Activated CD4-positive, alpha-beta memory T cell treated with anti-CD3 and anti-CD28 coated beads for 36 hours (primary cell): ENCODE measurements at regions of chr2 and their contacts with region 1.

Region 1: GRCh38 chr2:73736855-73737779 is at the start of gene TPRKB:
- DNase-seq: peak; percentile 98
- H3K4me3 Mint-ChIP-seq: peak within 1 kb of the TSS; percentile 93
- H3K27ac Mint-ChIP-seq: peak within 1 kb of the TSS; percentile 75
- H3K4me1 Mint-ChIP-seq: peaks cover 20% of the 10 kb centered on the region
- H3K27me3 Mint-ChIP-seq: no peaks in the 10 kb centered on the region
- total RNA-seq, gene TPRKB: 33.2 to 34.6 TPM

Region 2: GRCh38 chr2:73233154-73233931 is 503.8 kb before region 1 on chr2 and contains the start of gene PRADC1:
- CTCF ChIA-PET with region 1: no interaction called
- POLR2A ChIA-PET with region 1: interaction called, 3 read pairs
- intact Hi-C with region 1: loop called (anchors 1 kb)
- DNase-seq: peak; percentile 97
- H3K4me3 Mint-ChIP-seq: peak within 1 kb of the TSS; percentile 87
- H3K27ac Mint-ChIP-seq: peak within 1 kb of the TSS; percentile 80
- H3K4me1 Mint-ChIP-seq: peaks cover 29% of the 10 kb centered on the region
- H3K27me3 Mint-ChIP-seq: peaks cover 1% of the 10 kb centered on the region
- total RNA-seq, gene PRADC1: 12.9 to 13.6 TPM

Region 3: GRCh38 chr2:73385595-73386341 is 351.3 kb before region 1 on chr2 and contains the start of gene ALMS1:
- CTCF ChIA-PET with region 1: no interaction called
- POLR2A ChIA-PET with region 1: no interaction called
- intact Hi-C with region 1: loop called (anchors 10 kb)
- DNase-seq: peak; percentile 94
- H3K4me3 Mint-ChIP-seq: peak within 1 kb of the TSS; percentile 92
- H3K27ac Mint-ChIP-seq: peak within 1 kb of the TSS; percentile 82
- H3K4me1 Mint-ChIP-seq: peaks cover 26% of the 10 kb centered on the region
- H3K27me3 Mint-ChIP-seq: no peaks in the 10 kb centered on the region
- total RNA-seq, gene ALMS1: 20.4 to 22.7 TPM

Region 4: GRCh38 chr2:73451263-73451972 is 285.7 kb before region 1 on chr2:
- CTCF ChIA-PET with region 1: no interaction called
- POLR2A ChIA-PET with region 1: no interaction called
- intact Hi-C with region 1: no loop called
- DNase-seq: no peak
- H3K4me3 Mint-ChIP-seq: no peak overlapping the region
- H3K27ac Mint-ChIP-seq: no peak overlapping the region
- H3K4me1 Mint-ChIP-seq: no peaks in the 10 kb centered on the region
- H3K27me3 Mint-ChIP-seq: no peaks in the 10 kb centered on the region

Region 5: GRCh38 chr2:73779467-73780236 is 42.5 kb after region 1 on chr2 and contains the start of gene DUSP11:
- CTCF ChIA-PET with region 1: interaction called, 3 read pairs
- POLR2A ChIA-PET with region 1: interaction called, 3 read pairs
- intact Hi-C with region 1: loop called (anchors 1 kb)
- DNase-seq: peak; percentile 98
- H3K4me3 Mint-ChIP-seq: peak within 1 kb of the TSS; percentile 100
- H3K27ac Mint-ChIP-seq: peak within 1 kb of the TSS; percentile 97
- H3K4me1 Mint-ChIP-seq: peaks cover 25% of the 10 kb centered on the region
- H3K27me3 Mint-ChIP-seq: no peaks in the 10 kb centered on the region
- total RNA-seq, gene DUSP11: 28.0 to 28.5 TPM

Region 6: GRCh38 chr2:73892631-73893329 is 155.7 kb after region 1 on chr2 and contains the start of gene ACTG2:
- CTCF ChIA-PET with region 1: no interaction called
- POLR2A ChIA-PET with region 1: no interaction called
- intact Hi-C with region 1: no loop called
- DNase-seq: no peak
- H3K4me3 Mint-ChIP-seq: no peak within 1 kb of the TSS
- H3K27ac Mint-ChIP-seq: no peak within 1 kb of the TSS
- H3K4me1 Mint-ChIP-seq: peaks cover 27% of the 10 kb centered on the region
- H3K27me3 Mint-ChIP-seq: no peaks in the 10 kb centered on the region
- total RNA-seq, gene ACTG2: not detected

Region 7: DNA sequence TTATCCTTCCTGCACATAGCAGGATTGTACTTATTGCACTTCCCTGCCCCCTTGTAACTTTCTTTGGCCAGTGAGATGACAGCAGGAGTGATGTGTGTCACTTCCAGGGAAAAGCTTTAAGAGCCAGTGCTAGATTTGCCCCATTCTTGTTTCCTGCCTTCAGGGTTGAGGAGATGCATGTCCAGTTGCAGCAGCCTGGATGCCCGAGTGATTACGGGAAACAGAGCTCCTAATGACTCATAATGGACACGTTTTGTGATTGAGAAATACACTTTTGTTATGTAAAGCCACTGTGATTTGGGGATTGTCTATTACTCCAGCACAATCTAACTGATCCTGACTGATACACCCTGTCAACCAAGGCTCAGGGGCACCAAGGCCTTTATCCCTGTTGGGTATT is 242.6 kb after region 1 on chr2:
- CTCF ChIA-PET with region 1: no interaction called
- POLR2A ChIA-PET with region 1: no interaction called
- intact Hi-C with region 1: loop called (anchors 5 kb)
- DNase-seq: peak; percentile 33
- H3K4me3 Mint-ChIP-seq: peak overlapping the region; percentile 53
- H3K27ac Mint-ChIP-seq: peak overlapping the region; percentile 78
- H3K4me1 Mint-ChIP-seq: peaks cover 62% of the 10 kb centered on the region
- H3K27me3 Mint-ChIP-seq: no peaks in the 10 kb centered on the region